ENCODE measurements at regions of chr6 and their contacts with region 1.

Region 1: GRCh38 chr6:87197547-87197946 is 42.2 kb downstream of the ZNF292 start:
- DNase-seq: no peak
- ATAC-seq: no peak
- H3K4me3 ChIP-seq: no peak overlapping the region
- H3K27ac ChIP-seq: no peak overlapping the region
- H3K4me1 ChIP-seq: peaks cover 24% of the 10 kb centered on the region
- H3K27me3 ChIP-seq: no peaks in the 10 kb centered on the region
- CTCF ChIP-seq: no peak

Region 2: GRCh38 chr6:86215323-86215722 is 982.2 kb before region 1 on chr6:
- intact Hi-C with region 1: no loop called
- DNase-seq: no peak
- ATAC-seq: no peak
- H3K4me3 ChIP-seq: no peak overlapping the region
- H3K27ac ChIP-seq: no peak overlapping the region
- H3K4me1 ChIP-seq: no peaks in the 10 kb centered on the region
- H3K27me3 ChIP-seq: no peaks in the 10 kb centered on the region
- CTCF ChIP-seq: no peak

Region 3: DNA sequence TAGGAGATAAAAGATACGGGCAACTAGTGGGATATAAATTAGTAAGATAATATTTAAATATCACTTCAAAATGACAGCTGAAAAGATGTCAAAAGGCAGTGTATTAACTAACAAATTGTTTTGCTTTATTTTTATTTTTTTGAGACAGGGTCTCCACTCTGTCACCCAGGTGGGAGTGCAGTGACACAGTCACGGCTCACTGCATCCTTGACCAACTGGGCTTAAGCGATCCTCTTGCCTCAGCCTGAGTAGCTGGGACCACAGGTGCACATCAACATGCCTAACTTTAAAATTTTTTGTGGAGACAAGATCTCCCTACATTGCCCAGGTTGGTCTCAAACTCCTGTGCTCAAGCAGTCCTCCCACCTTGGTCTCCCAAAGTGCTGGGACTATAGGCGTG is 36.2 kb before region 1 on chr6:
- intact Hi-C with region 1: loop called (anchors 2 to 5 kb)
- DNase-seq: no peak
- ATAC-seq: no peak
- H3K4me3 ChIP-seq: no peak overlapping the region
- H3K27ac ChIP-seq: no peak overlapping the region
- H3K4me1 ChIP-seq: peaks cover 33% of the 10 kb centered on the region
- H3K27me3 ChIP-seq: no peaks in the 10 kb centered on the region
- CTCF ChIP-seq: no peak

Region 4: GRCh38 chr6:87182321-87182720 is 15.2 kb before region 1 on chr6:
- intact Hi-C with region 1: loop called in 1 of 2 experiments (anchors 1 kb)
- DNase-seq: no peak
- ATAC-seq: no peak
- H3K4me3 ChIP-seq: no peak overlapping the region
- H3K27ac ChIP-seq: no peak overlapping the region
- H3K4me1 ChIP-seq: peaks cover 38% of the 10 kb centered on the region
- H3K27me3 ChIP-seq: no peaks in the 10 kb centered on the region
- CTCF ChIP-seq: no peak

Measured in psoas muscle (tissue), 8 donors.